A673 (cell line): ENCODE measurements at regions of chr21 and their contacts with region 1.

Region 1: DNA sequence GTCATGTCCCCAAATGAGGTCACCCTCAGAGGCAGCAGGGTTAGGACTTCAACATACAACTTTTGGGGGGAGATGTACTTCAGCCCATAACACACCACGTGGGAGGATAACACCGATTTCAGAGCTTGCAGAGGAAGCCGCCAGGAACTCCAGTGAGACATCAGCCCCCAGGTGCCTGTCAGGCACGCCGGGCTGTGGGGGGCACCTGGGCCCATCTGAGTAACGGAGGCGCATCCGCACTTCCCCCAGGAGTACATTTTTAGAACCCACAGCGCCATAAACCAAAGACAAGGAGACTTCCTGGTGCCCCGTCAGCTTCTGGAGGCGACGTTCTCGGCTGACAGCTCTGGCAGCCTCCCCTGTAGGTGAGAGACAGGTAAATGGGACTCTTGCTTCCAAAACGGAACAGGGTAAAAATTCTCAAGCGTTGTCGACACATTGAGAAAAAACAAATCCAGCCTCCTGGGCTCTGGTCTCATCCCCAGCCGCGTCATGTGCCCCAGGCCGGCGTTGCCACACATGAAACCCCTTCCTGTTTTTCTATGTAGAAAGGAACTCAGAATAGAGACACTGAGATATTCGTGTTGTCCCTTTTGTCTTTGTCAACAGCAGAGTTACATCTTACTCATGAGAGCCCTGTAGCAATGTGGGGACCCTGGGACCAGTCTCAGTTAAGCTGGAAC is 93.3 kb downstream of the PDE9A start:
- DNase-seq: no peak
- H3K4me3 ChIP-seq: no peak overlapping the region
- H3K27ac ChIP-seq: no peak overlapping the region
- H3K4me1 ChIP-seq: no peaks in the 10 kb centered on the region
- H3K27me3 ChIP-seq: no peaks in the 10 kb centered on the region
- CTCF ChIP-seq: no peak

Region 2: GRCh38 chr21:42424914-42425541 is 321.7 kb before region 1 on chr21:
- CTCF ChIA-PET with region 1: no interaction called
- POLR2A ChIA-PET with region 1: no interaction called
- intact Hi-C with region 1: no loop called
- DNase-seq: peak; percentile 96
- H3K4me3 ChIP-seq: no peak overlapping the region
- H3K27ac ChIP-seq: peak overlapping the region; percentile 77
- H3K4me1 ChIP-seq: peaks cover 27% of the 10 kb centered on the region
- H3K27me3 ChIP-seq: peaks cover 75% of the 10 kb centered on the region
- CTCF ChIP-seq: no peak

Region 3: DNA sequence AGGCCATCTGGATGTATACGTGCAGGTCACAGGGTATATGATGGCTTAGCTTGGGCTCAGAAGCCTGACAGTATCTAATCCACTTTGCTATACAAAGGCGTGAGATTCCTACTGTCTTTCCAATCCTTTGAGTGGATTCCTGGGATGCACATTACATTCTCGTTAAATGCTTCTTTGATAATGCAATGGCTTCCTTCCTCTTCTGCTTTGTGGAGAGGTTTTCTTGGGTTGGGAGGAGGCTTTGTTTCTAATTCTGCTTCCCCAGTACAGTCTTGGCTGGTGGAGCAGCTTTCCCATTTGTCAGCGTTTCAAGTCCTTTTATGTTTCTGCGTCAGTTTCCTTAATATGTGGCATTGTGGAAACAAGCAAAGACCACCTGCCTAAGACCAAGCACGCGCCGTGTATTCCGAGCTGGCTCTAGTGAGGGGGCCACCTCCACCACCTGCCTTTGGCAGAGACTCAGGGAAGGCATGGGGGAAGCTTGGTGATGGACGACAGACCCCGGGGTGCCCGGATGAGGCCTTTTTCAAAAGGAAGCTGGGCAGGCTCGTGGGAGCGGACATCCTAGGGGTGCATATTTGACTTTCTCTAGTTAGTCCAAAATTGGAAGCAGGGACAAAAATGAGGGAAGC is 59.9 kb after region 1 on chr21:
- CTCF ChIA-PET with region 1: no interaction called
- POLR2A ChIA-PET with region 1: no interaction called
- intact Hi-C with region 1: loop called (anchors 10 kb)
- DNase-seq: peak; percentile 35
- H3K4me3 ChIP-seq: no peak overlapping the region
- H3K27ac ChIP-seq: no peak overlapping the region
- H3K4me1 ChIP-seq: no peaks in the 10 kb centered on the region
- H3K27me3 ChIP-seq: no peaks in the 10 kb centered on the region
- CTCF ChIP-seq: no peak